ENCODE measurements at regions of chr15 and their contacts with region 1.

Region 1: GRCh38 chr15:89358755-89359439 is 24.3 kb upstream of the POLG start:
- DNase-seq: peak in 1 of 2 experiments; percentile 93
- H3K4me3 ChIP-seq: peak overlapping the region in 3 of 4 experiments; percentile 25 to 58 (median 45); a peak in 5 of 8 replicates
- H3K27ac ChIP-seq: no peak overlapping the region
- H3K4me1 ChIP-seq: peaks cover 0 to 27% (median 13%) of the 10 kb centered on the region in 4 experiments; a peak in 5 of 7 replicates
- H3K27me3 ChIP-seq: peaks cover 63 to 82% (median 72%) of the 10 kb centered on the region in 4 experiments
- CTCF ChIP-seq: peak in 2 of 3 experiments; percentile 67 to 95; a peak in 3 of 4 replicates
- EP300 ChIP-seq: no peak
- POLR2A ChIP-seq: no peak
- RAD21 ChIP-seq: peak; percentile 88 to 92

Region 2: GRCh38 chr15:89247441-89247840 is 111.5 kb before region 1 on chr15:
- CTCF ChIA-PET with region 1: no interaction called
- POLR2A ChIA-PET with region 1: no interaction called
- DNase-seq: no peak
- H3K4me3 ChIP-seq: no peak overlapping the region
- H3K27ac ChIP-seq: no peak overlapping the region
- H3K4me1 ChIP-seq: peaks cover 0 to 9% (median 3%) of the 10 kb centered on the region in 4 experiments; a peak in 5 of 7 replicates
- H3K27me3 ChIP-seq: peaks cover 0 to 2% (median 0%) of the 10 kb centered on the region in 4 experiments; a peak in 3 of 7 replicates
- CTCF ChIP-seq: no peak
- EP300 ChIP-seq: no peak
- POLR2A ChIP-seq: no peak
- RAD21 ChIP-seq: no peak

Region 3: DNA sequence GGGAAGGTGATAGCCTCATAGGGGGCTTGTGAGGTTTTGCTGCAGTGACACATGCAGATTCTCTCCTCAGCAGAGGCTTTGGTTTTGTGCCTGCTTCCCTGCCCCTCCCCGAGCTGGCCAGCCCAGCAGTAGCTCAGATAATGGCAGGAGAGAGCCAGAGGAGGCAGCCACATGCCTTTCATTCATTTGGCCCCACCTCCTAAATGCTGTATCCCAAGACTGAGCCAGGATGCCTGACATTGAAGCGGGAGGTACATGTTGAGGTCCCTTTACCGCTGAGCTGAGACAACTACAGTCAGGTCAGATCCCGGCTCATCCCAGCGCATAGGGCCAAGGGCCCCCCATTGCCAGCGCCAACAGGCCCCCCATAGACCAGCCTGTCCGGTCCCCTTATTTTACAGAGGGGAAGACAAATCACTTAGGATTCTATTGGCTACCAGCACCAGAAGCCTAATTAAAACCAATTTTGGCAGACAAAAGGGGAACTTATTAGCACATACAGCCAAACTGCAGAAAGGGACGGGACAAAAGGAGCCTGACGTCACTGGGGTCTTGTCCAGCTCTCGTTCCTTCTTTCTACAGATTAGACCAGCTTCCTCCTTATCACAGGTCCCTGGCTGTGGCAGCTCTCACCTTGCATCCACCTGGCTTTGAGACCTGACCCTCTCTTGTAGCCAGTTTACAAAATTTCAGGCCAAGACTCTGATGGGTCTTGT is 12.2 kb before region 1 on chr15:
- CTCF ChIA-PET with region 1: interaction called, 125 read pairs
- POLR2A ChIA-PET with region 1: no interaction called
- DNase-seq: peak in 1 of 2 experiments; percentile 58
- H3K4me3 ChIP-seq: no peak overlapping the region
- H3K27ac ChIP-seq: no peak overlapping the region
- H3K4me1 ChIP-seq: peaks cover 0 to 10% (median 6%) of the 10 kb centered on the region in 4 experiments; a peak in 5 of 7 replicates
- H3K27me3 ChIP-seq: peaks cover 0 to 2% (median 0%) of the 10 kb centered on the region in 4 experiments; a peak in 1 of 7 replicates
- CTCF ChIP-seq: no peak
- EP300 ChIP-seq: no peak
- POLR2A ChIP-seq: no peak
- RAD21 ChIP-seq: no peak

Region 4: GRCh38 chr15:89430530-89431341 is 71.8 kb after region 1 on chr15:
- CTCF ChIA-PET with region 1: interaction called, 412 read pairs
- POLR2A ChIA-PET with region 1: interaction called, 3 read pairs
- DNase-seq: peak in 1 of 2 experiments; percentile 100
- H3K4me3 ChIP-seq: peak overlapping the region in 3 of 4 experiments; percentile 29 to 54 (median 41); a peak in 7 of 8 replicates
- H3K27ac ChIP-seq: no peak overlapping the region
- H3K4me1 ChIP-seq: peaks cover 0 to 9% (median 2%) of the 10 kb centered on the region in 4 experiments; a peak in 3 of 7 replicates
- H3K27me3 ChIP-seq: peaks cover 0 to 22% (median 13%) of the 10 kb centered on the region in 4 experiments; a peak in 6 of 7 replicates
- CTCF ChIP-seq: peak; percentile 97 to 99 (median 98)
- EP300 ChIP-seq: no peak
- POLR2A ChIP-seq: no peak
- RAD21 ChIP-seq: peak; percentile 84 to 90

Region 5: DNA sequence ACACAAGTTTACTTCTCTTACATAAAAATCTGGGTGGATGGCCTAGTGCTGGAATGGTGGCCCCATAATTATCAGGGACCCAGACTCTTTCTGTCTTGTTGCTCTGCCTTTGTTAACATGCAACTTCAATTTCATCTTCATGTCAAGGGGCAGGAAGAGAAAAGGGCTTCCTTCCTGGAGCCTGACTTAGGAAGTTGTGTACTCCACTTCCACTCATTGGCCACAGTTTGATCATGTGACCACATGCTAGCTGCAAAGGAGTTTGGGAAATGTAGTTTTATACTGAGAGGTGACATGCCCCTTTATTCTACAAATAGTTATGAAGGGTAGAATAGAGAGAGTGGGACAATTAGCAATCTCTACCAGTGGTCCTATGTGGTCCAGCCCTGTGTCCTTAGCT is 98.2 kb after region 1 on chr15:
- CTCF ChIA-PET with region 1: interaction called, 16 read pairs
- POLR2A ChIA-PET with region 1: no interaction called
- DNase-seq: no peak
- H3K4me3 ChIP-seq: no peak overlapping the region
- H3K27ac ChIP-seq: no peak overlapping the region
- H3K4me1 ChIP-seq: peaks cover 4 to 14% (median 9%) of the 10 kb centered on the region in 4 experiments
- H3K27me3 ChIP-seq: peaks cover 0 to 29% (median 23%) of the 10 kb centered on the region in 4 experiments; a peak in 4 of 7 replicates
- CTCF ChIP-seq: no peak
- EP300 ChIP-seq: no peak
- POLR2A ChIP-seq: no peak
- RAD21 ChIP-seq: no peak

Region 6: GRCh38 chr15:89485855-89486361 is 127.0 kb after region 1 on chr15:
- CTCF ChIA-PET with region 1: interaction called, 205 read pairs
- POLR2A ChIA-PET with region 1: no interaction called
- DNase-seq: no peak
- H3K4me3 ChIP-seq: no peak overlapping the region
- H3K27ac ChIP-seq: no peak overlapping the region
- H3K4me1 ChIP-seq: peaks cover 0 to 7% (median 0%) of the 10 kb centered on the region in 4 experiments; a peak in 3 of 7 replicates
- H3K27me3 ChIP-seq: no peaks in the 10 kb centered on the region; a peak in 1 of 7 replicates
- CTCF ChIP-seq: no peak
- EP300 ChIP-seq: no peak
- POLR2A ChIP-seq: no peak
- RAD21 ChIP-seq: no peak

Region 7: GRCh38 chr15:89556413-89557262 is 197.7 kb after region 1 on chr15:
- CTCF ChIA-PET with region 1: interaction called, 11 read pairs
- POLR2A ChIA-PET with region 1: no interaction called
- DNase-seq: peak; percentile 39 to 78
- H3K4me3 ChIP-seq: no peak overlapping the region
- H3K27ac ChIP-seq: no peak overlapping the region
- H3K4me1 ChIP-seq: no peaks in the 10 kb centered on the region
- H3K27me3 ChIP-seq: no peaks in the 10 kb centered on the region
- CTCF ChIP-seq: peak in 2 of 3 experiments; percentile 74 to 77; a peak in 3 of 4 replicates
- EP300 ChIP-seq: no peak
- POLR2A ChIP-seq: no peak
- RAD21 ChIP-seq: peak; percentile 68 to 77

Region 8: DNA sequence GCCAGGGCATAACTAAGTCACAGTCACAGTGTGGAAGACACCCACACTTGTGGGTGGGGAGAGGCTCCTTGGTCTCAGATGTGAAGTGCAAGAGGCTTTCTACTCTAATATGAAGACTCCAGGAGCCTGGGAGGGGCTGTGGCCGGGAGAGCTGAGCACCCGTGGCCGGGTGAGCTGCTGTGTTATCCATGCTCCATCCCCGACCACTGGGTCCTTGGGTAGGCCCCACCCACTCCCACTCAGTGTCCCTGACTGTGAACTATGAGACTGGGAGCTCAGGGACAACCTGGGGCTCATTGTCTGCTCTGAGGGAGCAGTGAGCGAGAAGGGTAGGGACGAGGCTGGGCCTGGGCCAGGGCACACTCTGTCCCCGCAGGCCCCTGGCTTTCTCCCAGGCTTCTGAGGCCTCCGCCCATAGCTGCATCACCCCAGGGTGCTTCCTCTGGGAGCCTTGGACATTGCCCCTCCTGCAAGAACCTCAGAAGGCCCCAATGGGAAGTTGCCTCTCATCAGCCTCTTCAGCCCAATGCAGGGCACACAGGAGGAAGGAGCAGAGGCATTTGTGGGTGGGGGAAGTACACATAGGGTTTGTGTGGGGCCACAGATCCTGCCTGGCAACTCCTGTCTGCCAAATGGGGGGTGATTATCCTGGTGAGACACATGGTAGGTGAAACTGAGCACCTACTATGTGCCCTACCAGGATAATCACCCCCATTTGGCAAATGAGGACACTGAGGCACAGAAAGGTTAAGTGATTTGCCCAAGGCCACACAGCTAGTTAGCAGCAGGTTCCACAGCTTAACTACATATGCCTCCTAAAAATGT is 453.3 kb after region 1 on chr15:
- CTCF ChIA-PET with region 1: no interaction called
- POLR2A ChIA-PET with region 1: no interaction called
- DNase-seq: no peak
- H3K4me3 ChIP-seq: no peak overlapping the region
- H3K27ac ChIP-seq: no peak overlapping the region
- H3K4me1 ChIP-seq: peaks cover 0 to 9% (median 2%) of the 10 kb centered on the region in 4 experiments; a peak in 2 of 7 replicates
- H3K27me3 ChIP-seq: peaks cover 5 to 35% (median 27%) of the 10 kb centered on the region in 4 experiments
- CTCF ChIP-seq: no peak
- EP300 ChIP-seq: no peak
- POLR2A ChIP-seq: no peak
- RAD21 ChIP-seq: no peak

Measured in H1 (cell line).